ENCODE measurements at regions of chr5 and their contacts with region 1.

Region 1: DNA sequence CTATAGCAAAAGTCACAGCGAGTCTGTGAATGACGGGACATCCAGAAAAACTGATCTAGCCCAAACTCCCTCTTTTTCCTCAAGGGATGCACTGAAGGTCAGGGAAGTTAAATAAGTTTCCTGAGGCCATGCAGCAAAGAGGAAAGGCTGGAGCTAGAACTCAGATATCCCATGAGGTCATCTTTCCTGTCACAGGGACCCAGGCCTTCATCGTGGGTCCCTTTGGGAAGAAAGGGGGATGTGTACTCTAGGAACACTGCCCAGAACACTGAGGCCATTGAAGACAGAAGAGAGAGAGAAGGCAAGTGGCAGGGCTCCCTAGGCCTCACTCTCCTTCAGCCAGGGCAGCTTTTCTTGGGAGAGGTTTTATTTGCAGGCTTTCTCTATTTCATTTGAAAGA is 182.0 kb downstream of the EBF1 start:
- DNase-seq: no peak
- CTCF ChIP-seq: no peak

Region 2: DNA sequence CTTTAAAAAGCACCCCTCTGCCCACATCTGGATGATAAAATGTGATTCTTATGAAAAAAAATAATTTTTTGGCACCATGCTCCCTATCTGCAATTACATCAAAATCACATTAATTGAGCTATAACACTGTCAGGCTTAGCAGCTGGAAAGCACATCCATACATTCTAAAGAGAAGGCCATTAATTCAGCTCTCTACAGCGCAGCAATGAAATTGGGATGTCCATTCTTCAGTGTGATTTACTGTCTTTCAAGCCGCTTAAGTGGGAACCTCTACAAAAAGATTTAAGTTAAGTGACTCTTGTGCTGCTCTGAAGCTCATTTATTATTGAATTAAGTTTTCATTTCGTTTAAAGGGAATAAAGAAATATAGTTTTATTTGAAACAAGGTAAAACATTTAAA is 10.7 kb after region 1 on chr5:
- CTCF ChIA-PET with region 1: interaction called, 13 read pairs
- POLR2A ChIA-PET with region 1: no interaction called
- DNase-seq: no peak
- CTCF ChIP-seq: no peak

Measured in GM10248 (cell line).